ENCODE measurements at regions of chr1 and their contacts with region 1.

Region 1: GRCh38 chr1:151327223-151327902 is at the start of gene PI4KB:
- DNase-seq: peak; percentile 87 to 88
- H3K4me3 ChIP-seq: peak within 1 kb of the TSS; percentile 67 to 87 (median 79)
- H3K27ac ChIP-seq: peak within 1 kb of the TSS; percentile 90
- H3K4me1 ChIP-seq: peaks cover 2 to 8% (median 5%) of the 10 kb centered on the region in 4 experiments; a peak in 5 of 7 replicates
- H3K27me3 ChIP-seq: no peaks in the 10 kb centered on the region
- CTCF ChIP-seq: no peak
- EP300 ChIP-seq: no peak
- POLR2A ChIP-seq: peak; percentile 67 to 82
- RAD21 ChIP-seq: no peak
- total RNA-seq, gene PI4KB: 30.1 and 31.0 TPM in 2 replicates

Region 2: DNA sequence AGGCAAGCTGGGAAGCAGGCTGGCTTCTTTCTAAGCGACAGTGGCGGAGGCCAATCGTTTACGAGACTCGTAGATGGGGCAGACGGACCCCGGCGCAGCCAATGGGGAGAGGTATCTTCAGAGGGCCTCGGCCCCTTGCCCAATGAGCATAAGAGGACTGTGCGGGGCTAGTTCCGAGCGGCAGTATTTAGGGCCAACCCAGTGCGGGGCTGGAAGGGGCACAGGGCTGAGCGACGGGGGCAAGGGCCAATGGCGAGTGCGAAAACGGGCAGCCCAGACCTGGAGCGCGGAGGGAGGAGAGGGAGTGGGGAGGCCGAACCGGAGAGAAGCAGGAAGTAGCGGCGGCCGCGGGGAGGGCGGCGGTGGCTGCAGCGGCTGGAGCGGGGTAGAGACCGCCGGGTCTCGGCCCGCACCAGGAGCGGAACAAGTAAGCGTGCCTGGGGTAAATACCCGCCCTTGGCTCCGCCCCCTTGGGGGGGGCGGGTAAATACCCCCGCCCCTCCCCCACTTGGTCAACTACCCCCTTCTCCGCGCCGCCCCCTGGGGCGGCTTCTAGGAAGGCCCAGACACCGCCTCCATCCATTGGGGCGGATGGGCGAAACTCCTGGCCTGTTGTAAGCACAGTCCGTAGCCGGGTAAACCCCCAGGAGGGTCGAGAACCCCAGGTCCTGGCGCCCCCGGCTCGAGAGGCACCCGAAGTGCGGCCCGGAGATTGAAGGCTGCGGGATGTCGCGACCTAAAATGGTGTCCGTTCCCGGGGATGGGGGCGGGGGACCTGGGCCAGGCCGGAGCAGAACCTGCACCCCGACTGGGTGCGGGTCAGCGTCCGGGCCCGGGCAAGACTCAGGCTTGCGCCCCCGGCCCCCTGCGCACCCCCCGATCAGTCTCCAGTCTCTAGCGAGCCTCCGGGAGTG is 45.1 kb before region 1 on chr1 and contains the start of gene ZNF687:
- CTCF ChIA-PET with region 1: no interaction called
- POLR2A ChIA-PET with region 1: interaction called, 25 read pairs
- DNase-seq: peak; percentile 98 to 100
- H3K4me3 ChIP-seq: peak within 1 kb of the TSS; percentile 77 to 96 (median 86)
- H3K27ac ChIP-seq: peak within 1 kb of the TSS; percentile 99
- H3K4me1 ChIP-seq: peaks cover 5 to 9% (median 7%) of the 10 kb centered on the region in 4 experiments; a peak in 5 of 7 replicates
- H3K27me3 ChIP-seq: no peaks in the 10 kb centered on the region
- CTCF ChIP-seq: no peak
- EP300 ChIP-seq: no peak
- POLR2A ChIP-seq: no peak; a peak in 1 of 3 replicates
- RAD21 ChIP-seq: no peak
- total RNA-seq, gene ZNF687: 43.0 and 45.9 TPM in 2 replicates

Region 3: GRCh38 chr1:151292207-151293030 is 34.9 kb before region 1 on chr1:
- CTCF ChIA-PET with region 1: interaction called, 6 read pairs
- POLR2A ChIA-PET with region 1: interaction called, 42 read pairs
- DNase-seq: no peak
- H3K4me3 ChIP-seq: no peak overlapping the region
- H3K27ac ChIP-seq: no peak overlapping the region
- H3K4me1 ChIP-seq: peaks cover 6 to 21% (median 15%) of the 10 kb centered on the region in 4 experiments
- H3K27me3 ChIP-seq: no peaks in the 10 kb centered on the region
- CTCF ChIP-seq: peak; percentile 23 to 38 (median 28); a peak in 3 of 4 replicates
- EP300 ChIP-seq: no peak
- POLR2A ChIP-seq: peak; percentile 51 to 53
- RAD21 ChIP-seq: peak; percentile 6 to 27; a peak in 2 of 4 replicates

Region 4: GRCh38 chr1:151311589-151312331 is 15.6 kb before region 1 on chr1:
- CTCF ChIA-PET with region 1: interaction called, 20 read pairs
- POLR2A ChIA-PET with region 1: interaction called, 20 read pairs
- DNase-seq: no peak
- H3K4me3 ChIP-seq: no peak overlapping the region
- H3K27ac ChIP-seq: no peak overlapping the region
- H3K4me1 ChIP-seq: 0 out of 7 replicates have a peak, but pooled peaks cover 0 to 3% (median 0%) of the 10 kb centered on the region in 4 experiments
- H3K27me3 ChIP-seq: no peaks in the 10 kb centered on the region
- CTCF ChIP-seq: no peak
- EP300 ChIP-seq: no peak
- POLR2A ChIP-seq: no peak
- RAD21 ChIP-seq: no peak

Region 5: DNA sequence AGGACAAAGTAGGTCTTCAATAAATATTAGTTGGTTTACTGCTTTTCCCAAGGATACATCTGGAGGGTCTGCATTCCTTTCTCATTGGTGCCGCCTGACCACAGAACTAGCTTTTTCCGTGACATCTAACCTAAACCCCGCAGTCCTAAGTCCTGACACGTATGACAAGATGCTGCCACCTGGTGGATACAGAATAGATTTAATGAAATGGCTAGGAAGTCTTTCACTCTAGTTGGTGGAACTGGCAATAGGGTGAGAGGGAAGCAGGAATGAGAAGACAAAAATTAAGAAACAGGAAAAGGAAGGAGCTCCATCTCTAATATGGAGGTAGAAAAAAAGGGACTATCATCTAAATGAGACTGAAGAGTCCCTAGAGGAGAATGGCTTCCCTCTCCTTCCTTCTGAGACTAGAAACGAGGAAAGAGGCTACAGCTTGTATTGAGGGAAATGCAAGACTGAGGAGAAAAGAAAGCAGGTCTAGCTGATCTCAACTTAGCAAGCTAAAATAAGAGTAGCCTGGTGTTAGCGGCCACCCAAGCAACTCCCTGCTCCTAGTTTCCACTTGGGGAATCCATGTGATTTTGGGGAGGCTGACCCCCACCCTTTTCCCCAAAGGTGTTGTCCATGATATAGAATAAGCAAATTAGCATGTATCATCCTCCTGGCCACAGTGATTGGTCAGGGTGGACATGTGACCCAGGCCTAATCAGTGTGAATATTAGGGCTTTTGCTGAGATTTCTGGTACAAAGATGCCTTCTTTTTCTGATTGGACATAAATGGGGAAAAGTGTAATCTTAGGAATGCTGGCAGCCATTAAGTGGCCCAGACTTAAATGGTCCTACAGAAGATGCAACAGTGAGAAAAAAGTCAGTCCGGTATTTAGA is 13.7 kb after region 1 on chr1:
- CTCF ChIA-PET with region 1: interaction called, 79 read pairs
- POLR2A ChIA-PET with region 1: interaction called, 46 read pairs
- DNase-seq: no peak
- H3K4me3 ChIP-seq: no peak overlapping the region
- H3K27ac ChIP-seq: no peak overlapping the region
- H3K4me1 ChIP-seq: peaks cover 3 to 5% (median 4%) of the 10 kb centered on the region in 4 experiments; a peak in 5 of 7 replicates
- H3K27me3 ChIP-seq: no peaks in the 10 kb centered on the region
- CTCF ChIP-seq: peak; percentile 18 to 78 (median 74)
- EP300 ChIP-seq: no peak
- POLR2A ChIP-seq: peak; percentile 13 to 22; a peak in 2 of 3 replicates
- RAD21 ChIP-seq: peak; percentile 84

Region 6: DNA sequence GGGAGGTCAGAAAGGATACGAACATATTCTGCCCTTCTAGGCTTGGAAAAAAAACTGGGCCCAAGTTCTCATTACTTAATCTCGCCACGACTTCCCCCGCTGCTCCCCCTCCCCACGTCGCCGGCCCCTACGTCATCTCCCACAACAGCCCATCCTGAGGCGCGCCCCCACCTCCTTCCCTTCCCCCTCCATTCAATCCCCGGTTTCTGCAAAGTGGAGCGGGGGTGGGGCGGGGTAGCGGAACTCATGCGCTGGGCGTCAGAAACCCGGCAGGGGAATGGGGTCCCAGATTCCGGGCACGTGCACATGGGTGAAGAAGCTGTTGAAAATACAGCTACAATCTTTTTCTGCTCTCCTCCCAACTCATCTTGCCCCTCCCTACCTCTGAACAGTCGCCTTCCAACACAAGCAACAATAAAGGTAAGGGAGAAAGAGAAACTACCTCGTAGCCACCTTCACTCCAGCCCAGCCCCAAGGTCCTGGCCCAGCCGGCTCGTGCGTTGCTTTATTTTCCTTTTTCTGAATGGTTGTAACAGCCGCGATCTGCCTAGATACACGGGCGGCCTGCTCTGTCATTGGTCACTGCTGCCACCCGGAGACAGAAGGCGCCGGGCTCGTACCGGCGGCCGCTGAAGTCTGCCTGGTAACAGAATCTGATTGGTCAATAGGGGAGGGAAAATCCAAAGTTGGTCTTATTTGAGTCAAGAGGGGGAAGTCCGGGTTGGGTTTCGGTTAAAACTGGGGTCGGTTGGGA is 19.6 kb after region 1 on chr1 and contains the start of gene RFX5:
- CTCF ChIA-PET with region 1: interaction called, 3 read pairs
- POLR2A ChIA-PET with region 1: interaction called, 46 read pairs
- DNase-seq: peak; percentile 89 to 98
- H3K4me3 ChIP-seq: peak within 1 kb of the TSS; percentile 61 to 76 (median 66)
- H3K27ac ChIP-seq: peak within 1 kb of the TSS; percentile 99
- H3K4me1 ChIP-seq: peaks cover 4 to 14% (median 12%) of the 10 kb centered on the region in 4 experiments; a peak in 5 of 7 replicates
- H3K27me3 ChIP-seq: no peaks in the 10 kb centered on the region
- CTCF ChIP-seq: no peak
- EP300 ChIP-seq: peak; percentile 74 to 97
- POLR2A ChIP-seq: peak; percentile 70 to 82
- RAD21 ChIP-seq: peak in 1 of 2 experiments; percentile 0; a peak in 1 of 4 replicates
- total RNA-seq, gene RFX5: 57.6 and 59.7 TPM in 2 replicates

Measured in H1 (cell line).